Activated CD4-positive, alpha-beta memory T cell treated with anti-CD3 and anti-CD28 coated beads, Interleukin-2, amount 10 ng/mL, durations not matched to agents 7 days and 5 days (primary cell): ENCODE measurements at regions of chr13 and their contacts with region 1.

Region 1: GRCh38 chr13:99051768-99052455 is 74.0 kb upstream of the DOCK9 start:
- DNase-seq: no peak
- H3K4me3 Mint-ChIP-seq: peak overlapping the region; percentile 55
- H3K27ac Mint-ChIP-seq: peak overlapping the region; percentile 93
- H3K4me1 Mint-ChIP-seq: peaks cover 84% of the 10 kb centered on the region
- H3K27me3 Mint-ChIP-seq: no peaks in the 10 kb centered on the region

Region 2: DNA sequence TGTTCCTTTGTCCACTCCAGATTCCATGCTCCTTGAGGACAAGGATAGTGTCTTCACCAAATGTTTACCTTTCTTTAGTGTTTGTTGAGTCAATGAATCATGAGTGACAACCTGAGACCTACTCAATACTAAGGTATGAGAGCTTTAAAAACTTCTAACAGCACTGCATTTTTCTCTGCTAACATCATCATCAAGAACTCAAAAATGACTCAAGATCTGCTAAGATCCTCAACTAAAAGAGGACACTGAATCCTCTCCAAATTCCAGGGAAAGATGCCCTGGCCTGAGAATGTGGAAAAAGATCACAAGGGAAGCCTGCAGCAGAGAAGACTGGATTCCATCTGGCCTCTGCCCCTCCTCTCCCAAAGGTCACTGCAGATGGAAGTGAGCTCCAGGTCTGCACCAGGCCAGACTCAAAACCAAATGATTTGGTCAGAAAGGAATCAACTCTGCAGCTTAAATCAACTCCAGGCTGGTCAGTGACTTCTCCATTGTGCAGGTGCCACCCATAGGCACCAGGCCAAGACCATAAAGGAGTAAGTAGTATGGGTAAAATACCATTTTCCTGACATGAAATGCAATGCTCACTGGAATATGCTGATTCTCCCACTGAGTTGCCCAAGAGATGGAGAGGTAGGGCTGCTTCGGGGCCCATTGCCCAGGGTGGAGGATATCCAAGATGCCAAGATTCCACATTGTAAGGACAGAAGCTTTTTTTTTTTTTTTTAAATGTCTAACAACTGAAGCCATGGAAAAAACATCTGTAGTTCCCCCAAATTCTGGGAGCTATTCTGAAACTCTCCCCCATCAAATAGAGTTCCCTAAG is 15.5 kb after region 1 on chr13:
- CTCF ChIA-PET with region 1: interaction called, 15 read pairs
- POLR2A ChIA-PET with region 1: interaction called, 35 read pairs
- DNase-seq: no peak
- H3K4me3 Mint-ChIP-seq: no peak overlapping the region
- H3K27ac Mint-ChIP-seq: peak overlapping the region; percentile 10
- H3K4me1 Mint-ChIP-seq: peaks cover 59% of the 10 kb centered on the region
- H3K27me3 Mint-ChIP-seq: no peaks in the 10 kb centered on the region